ENCODE measurements at regions of chr21 and their contacts with region 1.

Region 1: GRCh38 chr21:39125752-39126485 is 57.3 kb downstream of the PSMG1 start:
- DNase-seq: peak; percentile 78
- ATAC-seq: peak; percentile 98
- H3K4me3 ChIP-seq: no peak overlapping the region
- H3K27ac ChIP-seq: peak overlapping the region; percentile 14; the same call in 1 of the 2 replicates
- H3K4me1 ChIP-seq: peaks cover 4% of the 10 kb centered on the region; the same call in 1 of the 2 replicates
- H3K27me3 ChIP-seq: no peaks in the 10 kb centered on the region; the same call in 1 of the 2 replicates
- CTCF ChIP-seq: peak; percentile 78
- POLR2A ChIP-seq: 0 out of 2 replicates have a peak, but pooled peaks have one; percentile 33
- RAD21 ChIP-seq: peak; percentile 91

Region 2: DNA sequence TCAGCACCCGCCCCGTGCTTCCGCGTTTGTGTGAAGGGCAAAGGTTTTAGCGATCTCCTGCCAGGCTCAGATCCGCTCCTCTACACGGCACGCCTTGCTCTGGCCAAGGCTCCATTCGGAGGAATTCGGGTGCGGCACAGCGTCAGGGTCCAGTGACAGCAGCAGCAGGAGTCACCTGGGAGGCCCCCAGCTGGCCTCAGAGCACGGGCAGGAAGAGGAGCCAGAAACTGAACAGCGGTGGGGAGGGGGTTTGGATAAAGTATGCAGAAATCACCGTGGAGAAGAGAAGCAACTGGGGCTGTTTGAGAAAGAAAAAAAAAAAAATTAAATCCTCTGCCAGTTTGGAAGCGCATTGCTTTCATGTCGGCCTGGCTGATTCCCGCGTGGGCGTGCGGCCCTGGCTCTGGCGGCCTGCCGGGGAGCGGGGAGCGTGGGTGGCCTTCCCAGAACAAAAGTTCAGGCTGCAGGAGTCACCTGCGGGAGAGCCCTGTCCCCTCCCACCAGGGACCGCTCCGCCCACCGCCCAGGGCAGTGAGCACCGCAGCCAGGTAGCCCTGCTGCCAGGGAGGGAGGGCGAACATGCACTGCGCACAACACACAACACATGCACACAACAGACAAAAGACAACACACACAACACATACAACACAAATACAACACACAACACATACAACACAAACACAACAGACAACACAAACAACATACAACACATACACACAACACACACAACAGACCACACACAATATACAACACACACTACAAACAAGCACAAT is 212.6 kb before region 1 on chr21:
- CTCF ChIA-PET with region 1: no interaction called
- POLR2A ChIA-PET with region 1: no interaction called
- dilution Hi-C with region 1: no loop called
- in situ Hi-C with region 1: no loop called
- intact Hi-C with region 1: loop called (anchors 2 kb)
- DNase-seq: peak; percentile 69
- ATAC-seq: peak; percentile 40
- H3K4me3 ChIP-seq: no peak overlapping the region
- H3K27ac ChIP-seq: no peak overlapping the region
- H3K4me1 ChIP-seq: peaks cover 17% of the 10 kb centered on the region
- H3K27me3 ChIP-seq: no peaks in the 10 kb centered on the region
- CTCF ChIP-seq: no peak
- POLR2A ChIP-seq: no peak
- RAD21 ChIP-seq: no peak

Region 3: GRCh38 chr21:38993561-38993960 is 132.4 kb before region 1 on chr21:
- CTCF ChIA-PET with region 1: no interaction called
- POLR2A ChIA-PET with region 1: no interaction called
- dilution Hi-C with region 1: no loop called
- in situ Hi-C with region 1: no loop called
- intact Hi-C with region 1: loop called (anchors 2 kb)
- DNase-seq: peak; percentile 92
- ATAC-seq: peak; percentile 68
- H3K4me3 ChIP-seq: no peak overlapping the region
- H3K27ac ChIP-seq: peak overlapping the region; percentile 73
- H3K4me1 ChIP-seq: peaks cover 32% of the 10 kb centered on the region
- H3K27me3 ChIP-seq: no peaks in the 10 kb centered on the region
- CTCF ChIP-seq: no peak
- POLR2A ChIP-seq: no peak
- RAD21 ChIP-seq: no peak

Region 4: GRCh38 chr21:39189857-39190604 is 64.1 kb after region 1 on chr21:
- CTCF ChIA-PET with region 1: no interaction called
- POLR2A ChIA-PET with region 1: no interaction called
- dilution Hi-C with region 1: no loop called
- in situ Hi-C with region 1: no loop called
- intact Hi-C with region 1: no loop called
- DNase-seq: peak; percentile 64
- ATAC-seq: peak; percentile 79
- H3K4me3 ChIP-seq: no peak overlapping the region
- H3K27ac ChIP-seq: no peak overlapping the region
- H3K4me1 ChIP-seq: peaks cover 4% of the 10 kb centered on the region; the same call in 1 of the 2 replicates
- H3K27me3 ChIP-seq: no peaks in the 10 kb centered on the region
- CTCF ChIP-seq: no peak
- POLR2A ChIP-seq: no peak
- RAD21 ChIP-seq: no peak

Measured in IMR-90 (cell line).